Activated naive CD4-positive, alpha-beta T cell treated with anti-CD3 and anti-CD28 coated beads, Interleukin-2, amount 10 ng/mL, durations not matched to agents 7 days and 5 days (primary cell): ENCODE measurements at regions of chr3 and their contacts with region 1.

Region 1: GRCh38 chr3:177359593-177360357 is 162.5 kb upstream of the TBL1XR1 start:
- DNase-seq: peak; percentile 94
- H3K4me3 Mint-ChIP-seq: peak overlapping the region; percentile 73
- H3K27ac Mint-ChIP-seq: peak overlapping the region; percentile 99
- H3K4me1 Mint-ChIP-seq: peaks cover 55% of the 10 kb centered on the region
- H3K27me3 Mint-ChIP-seq: peaks cover 5% of the 10 kb centered on the region

Region 2: DNA sequence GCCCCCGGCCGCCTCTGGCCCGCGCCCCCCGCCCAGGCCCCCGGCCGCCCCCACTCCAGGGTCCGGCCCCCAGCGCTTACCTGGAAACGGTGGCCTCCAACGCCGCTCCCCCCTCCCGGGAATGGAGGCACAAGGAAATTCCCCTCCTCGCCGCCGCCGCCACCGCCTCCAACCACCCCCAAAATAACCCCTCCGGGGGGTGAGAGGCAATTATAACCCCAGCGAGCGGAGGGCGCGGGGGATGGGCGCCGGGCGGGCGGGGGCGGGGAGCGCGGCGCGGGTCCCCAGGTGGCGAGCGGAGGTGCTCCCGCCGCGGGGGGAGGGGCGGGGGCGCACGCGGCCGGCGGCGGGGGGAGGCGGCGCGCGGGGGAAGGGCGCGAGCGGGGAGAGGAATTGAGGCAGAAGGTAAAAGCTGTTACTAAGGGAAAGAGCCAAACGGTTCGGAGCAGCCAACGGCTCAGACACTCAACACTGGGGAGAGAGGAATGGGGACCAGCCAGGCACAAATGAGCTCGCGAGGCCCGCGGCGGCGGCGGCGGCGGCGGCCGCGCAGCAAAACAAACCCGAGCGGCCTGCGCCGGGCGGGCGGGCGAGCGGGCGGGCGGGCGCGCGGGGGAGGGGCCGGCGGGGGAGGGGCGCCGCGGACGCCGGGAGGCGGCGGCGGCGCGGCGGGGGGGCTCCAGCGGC is 162.6 kb before region 1 on chr3 and contains the start of gene TBL1XR1:
- CTCF ChIA-PET with region 1: interaction called, 21 read pairs
- DNase-seq: peak; percentile 93
- H3K4me3 Mint-ChIP-seq: peak within 1 kb of the TSS; percentile 82
- H3K27ac Mint-ChIP-seq: peak within 1 kb of the TSS; percentile 97
- H3K4me1 Mint-ChIP-seq: peaks cover 69% of the 10 kb centered on the region
- H3K27me3 Mint-ChIP-seq: no peaks in the 10 kb centered on the region